CD8-positive, alpha-beta T cell (primary cell): ENCODE measurements at regions of chr4 and their contacts with region 1.

Region 1: GRCh38 chr4:57553728-57554127 is 443.5 kb upstream of the IGFBP7 start:
- DNase-seq: no peak
- ATAC-seq: no peak
- H3K4me3 ChIP-seq: no peak overlapping the region
- H3K4me3 Mint-ChIP-seq: no peak overlapping the region
- H3K27ac ChIP-seq: no peak overlapping the region
- H3K27ac Mint-ChIP-seq: no peak overlapping the region
- H3K4me1 ChIP-seq: no peaks in the 10 kb centered on the region
- H3K4me1 Mint-ChIP-seq: no peaks in the 10 kb centered on the region
- H3K27me3 ChIP-seq: no peaks in the 10 kb centered on the region
- H3K27me3 Mint-ChIP-seq: no peaks in the 10 kb centered on the region
- CTCF ChIP-seq: no peak

Region 2: DNA sequence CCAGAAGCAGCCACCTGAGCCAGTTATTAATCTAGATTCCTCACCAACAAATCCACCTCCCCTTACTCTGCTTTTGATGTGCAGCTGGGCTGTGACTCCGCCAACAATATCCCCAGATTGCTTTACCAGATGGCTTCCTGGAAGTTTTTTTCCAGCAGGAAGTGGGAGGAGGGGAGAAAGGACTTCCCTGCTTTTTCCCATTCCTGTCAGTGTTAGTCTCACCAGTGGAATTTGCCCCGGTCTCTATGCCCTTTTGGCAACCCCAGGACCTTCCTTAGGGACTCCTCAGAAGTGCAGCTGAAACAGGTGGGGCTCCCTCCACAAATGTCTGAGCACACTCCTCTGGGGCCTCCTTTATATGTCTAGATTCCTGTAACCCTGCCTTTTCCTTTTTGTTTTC is 21.7 kb after region 1 on chr4:
- CTCF ChIA-PET with region 1: no interaction called
- POLR2A ChIA-PET with region 1: no interaction called
- intact Hi-C with region 1: loop called in 1 of 2 experiments (anchors 2 kb)
- DNase-seq: no peak
- ATAC-seq: no peak
- H3K4me3 ChIP-seq: no peak overlapping the region
- H3K4me3 Mint-ChIP-seq: no peak overlapping the region
- H3K27ac ChIP-seq: no peak overlapping the region
- H3K27ac Mint-ChIP-seq: no peak overlapping the region
- H3K4me1 ChIP-seq: no peaks in the 10 kb centered on the region
- H3K4me1 Mint-ChIP-seq: no peaks in the 10 kb centered on the region
- H3K27me3 ChIP-seq: no peaks in the 10 kb centered on the region
- H3K27me3 Mint-ChIP-seq: no peaks in the 10 kb centered on the region
- CTCF ChIP-seq: no peak